Body of pancreas (tissue), 4 donors: ENCODE measurements at regions of chr12 and their contacts with region 1.

Region 1: GRCh38 chr12:31406345-31406744 is 80.4 kb upstream of the SINHCAF start:
- DNase-seq: no peak
- ATAC-seq: no peak
- H3K4me3 ChIP-seq: no peak overlapping the region
- H3K27ac ChIP-seq: no peak overlapping the region
- H3K4me1 ChIP-seq: no peaks in the 10 kb centered on the region
- H3K27me3 ChIP-seq: no peaks in the 10 kb centered on the region
- CTCF ChIP-seq: no peak
- POLR2A ChIP-seq: no peak

Region 2: DNA sequence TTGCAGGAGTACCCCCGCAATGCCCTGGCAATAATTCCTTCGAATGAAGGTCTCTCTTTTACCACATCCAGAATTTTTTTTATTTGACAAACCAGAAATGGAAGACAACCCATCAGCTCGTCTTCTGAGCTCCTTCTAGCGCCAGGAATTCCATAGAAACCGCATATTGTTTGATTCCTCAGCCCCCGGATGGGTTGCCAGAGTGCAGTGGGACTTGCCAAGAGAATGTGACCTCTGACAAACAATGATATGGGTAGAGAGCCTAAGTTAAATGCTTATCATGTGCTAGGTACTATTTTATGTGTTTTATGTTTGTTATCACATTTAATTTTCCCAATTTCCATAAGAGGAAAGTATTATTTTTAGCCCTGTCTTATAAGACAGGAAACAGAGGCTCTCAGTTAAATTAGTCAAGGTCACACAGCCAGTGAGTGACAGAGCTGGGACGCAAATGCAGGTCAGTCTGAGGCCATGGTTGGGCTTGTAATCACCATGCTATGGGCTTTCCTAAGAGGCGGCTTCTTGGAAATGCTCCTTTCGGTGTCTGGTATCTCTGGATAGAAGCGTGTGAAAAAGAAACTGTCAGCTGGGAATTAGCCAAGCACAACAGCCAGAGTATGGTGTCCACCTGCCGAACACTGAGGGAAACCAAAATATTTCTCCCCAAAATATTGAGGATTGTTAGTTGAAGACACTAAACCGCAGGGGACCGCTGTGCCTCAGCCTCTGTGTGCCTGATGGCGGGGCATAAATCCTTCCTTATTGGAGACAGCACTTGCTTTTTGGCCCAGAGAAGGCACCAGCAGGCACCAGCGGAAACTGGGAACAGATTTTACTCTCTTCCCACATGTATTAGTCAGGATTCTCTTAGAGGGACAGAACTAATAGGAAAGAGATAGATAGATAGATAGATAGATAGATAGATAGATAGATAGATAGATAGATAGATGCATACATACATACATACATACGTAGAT is 223.7 kb after region 1 on chr12:
- intact Hi-C with region 1: loop called (anchors 5 kb)
- DNase-seq: peak; percentile 50 to 70 (median 58)
- ATAC-seq: peak; percentile 95
- H3K4me3 ChIP-seq: no peak overlapping the region
- H3K27ac ChIP-seq: peak overlapping the region in 3 of 4 donors; percentile 38 to 48 (median 46)
- H3K4me1 ChIP-seq: peaks cover 19% of the 10 kb centered on the region
- H3K27me3 ChIP-seq: no peaks in the 10 kb centered on the region
- CTCF ChIP-seq: no peak
- POLR2A ChIP-seq: no peak

Region 3: DNA sequence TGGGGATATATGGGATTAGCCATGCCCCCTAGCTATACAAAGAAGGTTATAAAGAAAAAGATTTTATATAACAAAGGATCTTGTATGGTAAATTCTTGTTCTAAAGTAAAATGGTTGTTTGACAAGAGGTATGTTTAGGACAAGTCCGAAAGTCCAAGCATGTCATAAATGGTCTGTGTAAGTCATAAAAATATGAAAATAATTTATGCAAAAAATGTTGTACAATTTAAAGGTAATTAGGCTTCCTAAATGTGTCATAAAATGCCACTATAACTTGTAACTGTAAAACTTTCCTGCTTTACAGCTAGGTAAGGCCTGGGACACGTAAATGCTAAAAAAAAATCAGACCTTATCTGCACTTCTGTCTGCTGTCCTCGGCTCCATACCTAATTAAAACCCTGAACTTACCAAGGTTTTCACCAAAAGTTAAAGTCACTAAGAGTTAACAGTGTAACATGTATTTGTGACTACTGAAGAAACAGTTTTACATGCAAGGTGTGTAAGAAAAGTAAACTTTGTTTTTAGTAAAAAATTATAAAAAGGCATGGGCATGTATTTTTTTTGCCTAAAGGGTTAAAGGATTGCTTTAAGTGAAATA is 442.8 kb after region 1 on chr12:
- intact Hi-C with region 1: no loop called
- DNase-seq: no peak
- ATAC-seq: no peak
- H3K4me3 ChIP-seq: no peak overlapping the region
- H3K27ac ChIP-seq: no peak overlapping the region
- H3K4me1 ChIP-seq: peaks cover 16% of the 10 kb centered on the region
- H3K27me3 ChIP-seq: no peaks in the 10 kb centered on the region
- CTCF ChIP-seq: no peak
- POLR2A ChIP-seq: no peak